ENCODE measurements at regions of chr9 and their contacts with region 1.

Region 1: GRCh38 chr9:113376634-113377567 is at the start of gene HDHD3:
- DNase-seq: peak; percentile 50 to 93 (median 76)
- ATAC-seq: peak; percentile 88
- H3K4me3 ChIP-seq: peak within 1 kb of the TSS; percentile 96
- H3K4me3 Mint-ChIP-seq: peak within 1 kb of the TSS; percentile 87
- H3K27ac ChIP-seq: peak within 1 kb of the TSS; percentile 59 to 65
- H3K27ac Mint-ChIP-seq: peak within 1 kb of the TSS; percentile 90
- H3K4me1 ChIP-seq: peaks cover 23% of the 10 kb centered on the region
- H3K4me1 Mint-ChIP-seq: peaks cover 21% of the 10 kb centered on the region
- H3K27me3 ChIP-seq: no peaks in the 10 kb centered on the region
- H3K27me3 Mint-ChIP-seq: no peaks in the 10 kb centered on the region
- CTCF ChIP-seq: no peak
- total RNA-seq, gene HDHD3: 12.8 to 13.2 TPM

Region 2: GRCh38 chr9:113340017-113340699 is 36.7 kb before region 1 on chr9 and contains the start of gene WDR31:
- CTCF ChIA-PET with region 1: no interaction called
- POLR2A ChIA-PET with region 1: interaction called, 5 read pairs
- intact Hi-C with region 1: loop called in 1 of 2 experiments (anchors 1 kb)
- DNase-seq: peak; percentile 56 to 88 (median 74)
- ATAC-seq: peak; percentile 99
- H3K4me3 ChIP-seq: peak within 1 kb of the TSS; percentile 82
- H3K4me3 Mint-ChIP-seq: peak within 1 kb of the TSS; percentile 91
- H3K27ac ChIP-seq: no peak within 1 kb of the TSS
- H3K27ac Mint-ChIP-seq: peak within 1 kb of the TSS; percentile 14
- H3K4me1 ChIP-seq: peaks cover 18% of the 10 kb centered on the region
- H3K4me1 Mint-ChIP-seq: peaks cover 25% of the 10 kb centered on the region
- H3K27me3 ChIP-seq: no peaks in the 10 kb centered on the region
- H3K27me3 Mint-ChIP-seq: peaks cover 11% of the 10 kb centered on the region
- CTCF ChIP-seq: no peak
- total RNA-seq, gene WDR31: 0.14 to 0.22 TPM

Region 3: GRCh38 chr9:113356686-113357292 is 20.1 kb before region 1 on chr9:
- CTCF ChIA-PET with region 1: no interaction called
- POLR2A ChIA-PET with region 1: no interaction called
- intact Hi-C with region 1: no loop called
- DNase-seq: no peak
- ATAC-seq: no peak
- H3K4me3 ChIP-seq: no peak overlapping the region
- H3K4me3 Mint-ChIP-seq: no peak overlapping the region
- H3K27ac ChIP-seq: no peak overlapping the region
- H3K27ac Mint-ChIP-seq: no peak overlapping the region
- H3K4me1 ChIP-seq: no peaks in the 10 kb centered on the region
- H3K4me1 Mint-ChIP-seq: no peaks in the 10 kb centered on the region
- H3K27me3 ChIP-seq: peaks cover 0 to 5% of the 10 kb centered on the region in 2 experiments
- H3K27me3 Mint-ChIP-seq: peaks cover 29% of the 10 kb centered on the region
- CTCF ChIP-seq: no peak